A673 (cell line): ENCODE measurements at regions of chr18 and their contacts with region 1.

Region 1: GRCh38 chr18:58624011-58624410 is 4.9 kb downstream of the ALPK2 start:
- DNase-seq: no peak
- H3K4me3 ChIP-seq: no peak overlapping the region
- H3K27ac ChIP-seq: no peak overlapping the region
- H3K4me1 ChIP-seq: peaks cover 7% of the 10 kb centered on the region
- H3K27me3 ChIP-seq: no peaks in the 10 kb centered on the region
- CTCF ChIP-seq: no peak

Region 2: DNA sequence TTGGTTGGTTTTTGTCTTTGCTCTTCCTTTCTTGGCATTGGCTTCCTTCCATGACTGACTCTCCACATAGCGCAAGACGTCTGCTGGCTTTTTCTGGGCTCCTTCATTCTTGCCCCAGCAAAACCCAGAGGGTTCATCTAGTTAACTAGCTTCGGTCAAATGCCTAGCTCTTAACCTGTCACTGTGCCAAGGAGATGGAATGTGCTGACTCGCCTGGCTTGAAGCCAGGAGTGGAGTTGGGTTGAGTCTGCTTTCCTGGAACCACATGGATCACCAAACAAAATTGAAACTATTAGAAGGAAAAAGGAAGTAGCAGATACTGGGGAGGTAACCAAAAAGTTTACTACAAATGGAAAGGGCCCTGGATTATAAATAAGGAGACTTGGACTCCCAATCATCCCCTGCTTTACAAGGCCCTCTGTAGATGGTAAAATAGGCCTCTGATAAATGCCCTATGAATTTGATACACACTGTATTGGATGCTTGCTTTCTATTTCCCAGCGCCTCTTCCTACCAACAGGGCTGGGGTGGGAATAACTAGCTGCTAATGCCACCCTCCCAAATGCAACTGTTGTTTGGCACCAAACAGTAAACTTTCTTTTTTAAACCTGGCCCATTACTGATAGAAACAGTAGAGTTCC is 58.5 kb after region 1 on chr18:
- CTCF ChIA-PET with region 1: no interaction called
- POLR2A ChIA-PET with region 1: no interaction called
- intact Hi-C with region 1: loop called (anchors 10 kb)
- DNase-seq: peak; percentile 88
- H3K4me3 ChIP-seq: no peak overlapping the region
- H3K27ac ChIP-seq: peak overlapping the region; percentile 18
- H3K4me1 ChIP-seq: peaks cover 21% of the 10 kb centered on the region
- H3K27me3 ChIP-seq: no peaks in the 10 kb centered on the region
- CTCF ChIP-seq: no peak

Region 3: DNA sequence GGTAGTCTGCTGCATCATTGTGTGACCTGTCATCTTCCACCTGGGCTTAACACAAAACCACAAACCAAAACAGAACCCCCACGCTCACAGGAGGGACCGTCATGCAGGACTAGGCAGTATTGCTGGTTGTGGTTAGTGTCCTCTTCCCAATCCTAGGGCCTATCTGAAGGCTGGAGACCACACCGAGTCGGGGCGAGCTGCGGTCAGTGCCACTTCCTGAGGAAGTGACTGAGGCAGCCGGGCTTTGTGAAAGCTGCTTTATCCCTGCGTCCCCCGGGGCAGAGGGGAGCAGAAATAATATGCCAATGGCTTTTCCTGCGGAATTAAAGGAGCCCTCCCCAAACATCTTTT is 263.6 kb after region 1 on chr18:
- CTCF ChIA-PET with region 1: no interaction called
- POLR2A ChIA-PET with region 1: no interaction called
- intact Hi-C with region 1: no loop called
- DNase-seq: peak; percentile 78
- H3K4me3 ChIP-seq: peak overlapping the region; percentile 0
- H3K27ac ChIP-seq: peak overlapping the region; percentile 69
- H3K4me1 ChIP-seq: peaks cover 32% of the 10 kb centered on the region
- H3K27me3 ChIP-seq: no peaks in the 10 kb centered on the region
- CTCF ChIP-seq: no peak